ENCODE measurements at regions of chr3 and their contacts with region 1.

Region 1: GRCh38 chr3:32384938-32385337 is 6.7 kb upstream of the CMTM7 start:
- DNase-seq: no peak
- ATAC-seq: peak in 2 of 4 donors; percentile 42 to 44
- H3K4me3 ChIP-seq: no peak overlapping the region
- H3K27ac ChIP-seq: no peak overlapping the region
- H3K4me1 ChIP-seq: no peaks in the 10 kb centered on the region
- H3K27me3 ChIP-seq: no peaks in the 10 kb centered on the region
- CTCF ChIP-seq: no peak
- POLR2A ChIP-seq: no peak

Region 2: DNA sequence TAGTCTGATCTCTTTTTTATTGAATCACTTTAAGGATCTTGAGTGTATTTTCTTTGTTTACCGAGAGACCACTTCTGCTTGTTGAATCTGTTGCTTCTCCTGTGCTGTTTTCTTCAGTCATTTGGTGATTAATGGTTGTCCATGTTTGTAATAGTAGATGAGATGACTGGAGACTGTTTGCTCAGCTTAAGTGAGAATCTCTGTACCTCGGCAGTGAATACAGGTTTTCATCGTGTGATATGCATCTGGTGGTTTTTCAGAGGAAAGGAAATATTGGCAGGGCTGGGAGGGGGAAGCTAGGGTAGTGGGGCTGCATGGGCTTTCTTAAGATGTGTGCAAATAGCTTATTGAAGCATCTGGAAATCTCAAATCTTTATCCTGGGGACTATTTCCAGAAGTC is 127.3 kb before region 1 on chr3:
- intact Hi-C with region 1: no loop called
- DNase-seq: no peak
- ATAC-seq: no peak
- H3K4me3 ChIP-seq: no peak overlapping the region
- H3K27ac ChIP-seq: no peak overlapping the region
- H3K4me1 ChIP-seq: peaks cover 0 to 3% (median 0%) of the 10 kb centered on the region in 4 donors
- H3K27me3 ChIP-seq: no peaks in the 10 kb centered on the region
- CTCF ChIP-seq: no peak
- POLR2A ChIP-seq: no peak

Region 3: DNA sequence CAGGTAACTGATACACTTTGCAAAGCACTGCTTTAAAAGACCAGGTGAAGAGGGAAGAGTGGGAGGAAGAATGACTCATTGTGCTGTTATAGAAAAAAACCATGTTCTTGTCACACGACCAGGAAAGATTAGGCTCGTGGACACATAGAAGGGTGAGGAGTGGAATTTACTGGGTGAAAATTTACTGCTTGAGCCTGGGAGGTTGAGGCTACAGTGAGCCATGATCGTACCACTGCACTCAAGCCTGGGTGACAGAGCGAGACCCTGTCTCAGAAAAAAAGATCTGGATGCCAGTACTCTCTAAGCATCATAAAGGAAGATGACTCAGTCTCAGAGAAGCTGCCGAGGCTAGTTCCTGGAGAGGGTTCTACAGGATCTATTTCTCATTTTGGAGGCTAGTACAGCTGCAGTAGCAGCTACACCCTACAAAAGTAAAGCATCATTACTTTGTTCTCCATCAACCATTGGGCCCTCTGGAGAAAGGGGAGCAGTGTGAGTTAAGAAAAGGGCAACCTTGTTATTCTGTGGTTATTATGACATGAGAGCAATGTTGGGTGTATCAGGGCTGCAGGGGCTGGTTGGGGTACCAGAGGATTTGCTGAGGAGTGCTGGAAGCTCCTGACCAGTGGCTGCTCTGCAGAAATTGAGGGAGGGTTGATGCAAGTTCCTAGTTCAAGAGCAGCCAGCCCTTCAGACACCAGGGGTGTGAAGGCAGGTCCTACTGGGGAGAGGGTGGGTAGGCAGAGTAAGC is 71.0 kb before region 1 on chr3:
- intact Hi-C with region 1: no loop called
- DNase-seq: no peak
- ATAC-seq: peak in 2 of 4 donors; percentile 27 to 53
- H3K4me3 ChIP-seq: no peak overlapping the region
- H3K27ac ChIP-seq: no peak overlapping the region
- H3K4me1 ChIP-seq: peaks cover 0 to 3% (median 0%) of the 10 kb centered on the region in 4 donors
- H3K27me3 ChIP-seq: no peaks in the 10 kb centered on the region
- CTCF ChIP-seq: no peak
- POLR2A ChIP-seq: no peak

Region 4: GRCh38 chr3:32443478-32443877 is 58.5 kb after region 1 on chr3:
- intact Hi-C with region 1: loop called in 1 of 2 experiments (anchors 10 kb)
- DNase-seq: no peak
- ATAC-seq: no peak
- H3K4me3 ChIP-seq: no peak overlapping the region
- H3K27ac ChIP-seq: no peak overlapping the region
- H3K4me1 ChIP-seq: no peaks in the 10 kb centered on the region
- H3K27me3 ChIP-seq: no peaks in the 10 kb centered on the region
- CTCF ChIP-seq: no peak
- POLR2A ChIP-seq: no peak